IMR-90 (cell line): ENCODE measurements at regions of chr22 and their contacts with region 1.

Region 1: GRCh38 chr22:37589636-37590035 is 9.7 kb upstream of the LGALS2 start:
- DNase-seq: no peak
- ATAC-seq: no peak
- H3K4me3 ChIP-seq: no peak overlapping the region
- H3K27ac ChIP-seq: no peak overlapping the region
- H3K4me1 ChIP-seq: no peaks in the 10 kb centered on the region; the same call in 1 of the 2 replicates
- H3K27me3 ChIP-seq: peaks cover 17% of the 10 kb centered on the region
- CTCF ChIP-seq: no peak
- POLR2A ChIP-seq: no peak
- RAD21 ChIP-seq: no peak

Region 2: GRCh38 chr22:37608477-37609239 is 19.0 kb after region 1 on chr22 and contains the start of gene GGA1:
- CTCF ChIA-PET with region 1: interaction called, 18 read pairs
- POLR2A ChIA-PET with region 1: interaction called, 4 read pairs
- dilution Hi-C with region 1: no loop called
- in situ Hi-C with region 1: no loop called
- intact Hi-C with region 1: no loop called
- DNase-seq: peak; percentile 97
- ATAC-seq: peak; percentile 91
- H3K4me3 ChIP-seq: peak within 1 kb of the TSS; percentile 56
- H3K27ac ChIP-seq: peak within 1 kb of the TSS; percentile 96
- H3K4me1 ChIP-seq: peaks cover 12% of the 10 kb centered on the region
- H3K27me3 ChIP-seq: peaks cover 7% of the 10 kb centered on the region
- CTCF ChIP-seq: 0 out of 2 replicates have a peak, but pooled peaks have one; percentile 5
- POLR2A ChIP-seq: peak; percentile 78
- RAD21 ChIP-seq: no peak
- total RNA-seq, gene GGA1: 17.2 and 19.7 TPM in 2 replicates